Heart left ventricle (tissue), 16 donors: ENCODE measurements at regions of chr1 and their contacts with region 1.

Region 1: GRCh38 chr1:10338047-10338446 is 60.8 kb upstream of the PGD start:
- DNase-seq: peak in 4 of 5 donors; percentile 33 to 54 (median 43)
- ATAC-seq: peak; percentile 83 to 91 (median 86)
- H3K4me3 ChIP-seq: no peak overlapping the region
- H3K27ac ChIP-seq: peak overlapping the region in 2 of 12 donors; percentile 36 to 48
- H3K4me1 ChIP-seq: peaks cover 0 to 25% (median 12%) of the 10 kb centered on the region in 12 donors
- H3K27me3 ChIP-seq: no peaks in the 10 kb centered on the region
- CTCF ChIP-seq: peak; percentile 48 to 78 (median 72)
- POLR2A ChIP-seq: no peak

Region 2: GRCh38 chr1:10143961-10144485 is 194.0 kb before region 1 on chr1:
- intact Hi-C with region 1: loop called in 1 of 10 experiments (anchors 10 kb)
- DNase-seq: no peak
- ATAC-seq: no peak
- H3K4me3 ChIP-seq: no peak overlapping the region
- H3K27ac ChIP-seq: no peak overlapping the region
- H3K4me1 ChIP-seq: peaks cover 0 to 2% (median 0%) of the 10 kb centered on the region in 12 donors
- H3K27me3 ChIP-seq: no peaks in the 10 kb centered on the region
- CTCF ChIP-seq: no peak
- POLR2A ChIP-seq: no peak

Region 3: GRCh38 chr1:10152709-10153284 is 185.2 kb before region 1 on chr1:
- intact Hi-C with region 1: loop called in 2 of 10 experiments (anchors 5 to 10 kb)
- DNase-seq: peak in 3 of 5 donors; percentile 30 to 39 (median 34)
- ATAC-seq: peak in 2 of 4 donors; percentile 40 to 47
- H3K4me3 ChIP-seq: no peak overlapping the region
- H3K27ac ChIP-seq: peak overlapping the region in 2 of 12 donors; percentile 13 to 85
- H3K4me1 ChIP-seq: peaks cover 0 to 28% (median 1%) of the 10 kb centered on the region in 12 donors
- H3K27me3 ChIP-seq: no peaks in the 10 kb centered on the region
- CTCF ChIP-seq: peak; percentile 18 to 65 (median 46)
- POLR2A ChIP-seq: no peak